ENCODE measurements at regions of chr2 and their contacts with region 1.

Region 1: GRCh38 chr2:239002954-239003588 is 155.2 kb downstream of the TWIST2 start:
- DNase-seq: peak; percentile 57

Region 2: GRCh38 chr2:238974501-238975166 is 28.4 kb before region 1 on chr2:
- intact Hi-C with region 1: loop called (anchors 1 kb)
- DNase-seq: no peak

Region 3: GRCh38 chr2:239151201-239152131 is 148.4 kb after region 1 on chr2:
- intact Hi-C with region 1: no loop called
- DNase-seq: peak; percentile 61